Caki2 (cell line): ENCODE measurements at regions of chr9 and their contacts with region 1.

Region 1: DNA sequence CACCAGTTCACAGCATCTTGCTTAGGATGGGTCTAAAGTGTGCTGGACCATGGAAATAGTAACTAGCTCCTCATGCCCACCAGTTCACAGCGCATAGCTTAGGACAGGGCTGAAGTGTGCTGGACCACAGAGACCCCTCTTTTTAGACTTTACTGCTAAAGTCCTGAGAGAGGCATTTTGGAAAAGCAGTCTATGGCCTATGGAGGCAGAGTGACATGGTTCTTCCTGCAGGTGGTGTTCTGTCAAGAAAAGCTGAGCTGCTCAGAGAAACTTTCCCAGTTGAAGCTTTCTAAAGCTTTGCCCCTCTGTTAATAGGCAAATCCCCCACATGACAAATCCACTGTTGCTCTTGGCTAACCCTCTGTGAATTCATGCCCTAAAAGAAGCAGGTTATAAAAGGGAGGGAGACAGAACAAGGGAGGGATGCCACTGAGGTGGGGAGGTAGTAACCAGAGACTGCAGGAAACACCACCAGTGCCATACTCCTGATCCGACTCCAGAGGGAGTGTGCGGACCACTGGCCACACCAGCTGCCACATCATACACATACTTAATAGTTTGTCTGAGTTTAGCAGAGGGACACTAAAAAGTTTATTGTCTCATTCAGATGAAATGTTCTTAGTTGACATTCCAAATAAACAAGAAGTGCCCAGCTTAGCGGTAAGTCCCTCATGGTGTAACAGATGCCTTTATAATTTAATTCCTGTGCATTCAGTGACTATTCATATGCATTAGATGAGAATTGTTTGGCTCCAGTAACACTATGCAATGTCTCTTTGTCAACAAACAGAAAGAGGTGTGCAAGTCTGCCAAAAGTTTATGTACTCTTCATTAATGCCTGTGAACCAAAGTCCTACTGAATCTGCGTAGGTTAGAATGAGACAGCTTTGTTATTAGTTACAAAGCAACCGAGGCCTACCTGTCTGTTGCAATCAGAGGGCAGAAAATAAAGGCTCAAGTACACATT is 236.2 kb upstream of the NFIL3 start:
- DNase-seq: no peak

Region 2: GRCh38 chr9:91433180-91433579 is 226.6 kb before region 1 on chr9:
- in situ Hi-C with region 1: no loop called
- DNase-seq: peak; percentile 79

Region 3: GRCh38 chr9:91515074-91515687 is 144.6 kb before region 1 on chr9:
- in situ Hi-C with region 1: loop called (anchors 25 kb)
- DNase-seq: peak; percentile 61